CD4-positive, alpha-beta T cell (primary cell): ENCODE measurements at regions of chr14 and their contacts with region 1.

Region 1: GRCh38 chr14:99604283-99604765 is 317 bp upstream of the CCDC85C start:
- DNase-seq: peak; percentile 89 to 98 (median 96)
- ATAC-seq: peak; percentile 91
- H3K4me3 ChIP-seq: peak overlapping the region; percentile 88
- H3K4me3 Mint-ChIP-seq: peak overlapping the region; percentile 88
- H3K27ac ChIP-seq: peak overlapping the region; percentile 66 to 77
- H3K27ac Mint-ChIP-seq: peak overlapping the region; percentile 85
- H3K4me1 ChIP-seq: peaks cover 50% of the 10 kb centered on the region
- H3K4me1 Mint-ChIP-seq: peaks cover 47% of the 10 kb centered on the region
- H3K27me3 ChIP-seq: no peaks in the 10 kb centered on the region
- H3K27me3 Mint-ChIP-seq: no peaks in the 10 kb centered on the region
- CTCF ChIP-seq: no peak

Region 2: GRCh38 chr14:99064226-99064954 is 539.9 kb before region 1 on chr14:
- CTCF ChIA-PET with region 1: no interaction called
- POLR2A ChIA-PET with region 1: no interaction called
- intact Hi-C with region 1: no loop called
- DNase-seq: no peak
- ATAC-seq: no peak
- H3K4me3 ChIP-seq: no peak overlapping the region
- H3K4me3 Mint-ChIP-seq: no peak overlapping the region
- H3K27ac ChIP-seq: no peak overlapping the region
- H3K27ac Mint-ChIP-seq: no peak overlapping the region
- H3K4me1 ChIP-seq: no peaks in the 10 kb centered on the region
- H3K4me1 Mint-ChIP-seq: peaks cover 8% of the 10 kb centered on the region
- H3K27me3 ChIP-seq: no peaks in the 10 kb centered on the region
- H3K27me3 Mint-ChIP-seq: no peaks in the 10 kb centered on the region
- CTCF ChIP-seq: no peak

Region 3: GRCh38 chr14:99480917-99481744 is 123.2 kb before region 1 on chr14 and contains the start of gene CCNK:
- CTCF ChIA-PET with region 1: no interaction called
- POLR2A ChIA-PET with region 1: interaction called, 66 read pairs
- intact Hi-C with region 1: loop called (anchors 2 to 5 kb)
- DNase-seq: peak; percentile 100
- ATAC-seq: peak; percentile 87
- H3K4me3 ChIP-seq: peak within 1 kb of the TSS; percentile 96
- H3K4me3 Mint-ChIP-seq: peak within 1 kb of the TSS; percentile 92
- H3K27ac ChIP-seq: peak within 1 kb of the TSS; percentile 90 to 96
- H3K27ac Mint-ChIP-seq: peak within 1 kb of the TSS; percentile 94
- H3K4me1 ChIP-seq: peaks cover 29% of the 10 kb centered on the region
- H3K4me1 Mint-ChIP-seq: peaks cover 74% of the 10 kb centered on the region
- H3K27me3 ChIP-seq: no peaks in the 10 kb centered on the region
- H3K27me3 Mint-ChIP-seq: no peaks in the 10 kb centered on the region
- CTCF ChIP-seq: no peak
- total RNA-seq, gene CCNK: 140 to 151 TPM

Region 4: DNA sequence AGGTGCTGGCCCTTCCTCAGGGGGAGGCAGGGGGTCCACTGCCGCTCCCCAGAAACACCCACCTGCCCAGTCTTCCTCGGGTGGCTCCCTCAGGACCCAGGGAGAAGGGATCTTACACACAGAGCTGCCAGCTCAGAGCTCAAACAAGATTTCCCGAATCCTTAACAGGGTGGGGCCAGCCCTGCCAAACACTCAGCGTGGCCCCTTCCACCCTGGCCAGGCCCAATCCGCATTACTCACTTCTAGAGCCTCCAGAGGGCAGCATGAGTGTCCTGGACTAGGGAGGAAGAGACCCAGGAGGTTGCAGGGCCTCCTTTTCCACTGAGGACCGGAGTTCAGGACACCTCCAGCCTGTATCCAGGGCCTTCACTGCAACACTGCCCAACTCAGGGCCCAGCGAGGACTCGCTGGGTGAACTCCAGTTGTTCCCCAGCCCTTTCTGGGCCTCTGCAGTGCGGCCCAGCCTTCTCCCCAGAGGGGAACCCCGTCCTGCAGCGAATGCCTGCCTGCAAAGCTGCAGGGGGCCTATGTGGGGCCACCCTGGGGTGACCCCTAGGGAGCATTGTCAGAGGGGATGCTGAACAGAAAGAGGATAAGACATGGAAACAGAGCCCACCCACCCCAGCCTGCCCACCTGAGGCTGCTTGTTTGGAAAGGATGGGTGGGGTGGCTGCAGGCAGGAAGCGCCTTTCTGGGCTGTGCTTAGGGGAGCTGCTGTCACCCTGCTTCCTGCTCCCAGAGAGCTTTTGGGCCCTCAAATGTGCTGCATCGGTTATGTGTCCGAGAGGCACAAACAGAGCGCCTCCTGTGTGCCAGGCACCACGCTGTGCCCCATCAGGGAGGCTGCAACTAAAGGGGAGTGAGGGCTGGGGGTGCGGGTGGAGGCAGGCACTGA is 79.3 kb before region 1 on chr14:
- CTCF ChIA-PET with region 1: no interaction called
- POLR2A ChIA-PET with region 1: interaction called, 17 read pairs
- intact Hi-C with region 1: no loop called
- DNase-seq: peak in 7 of 14 experiments; percentile 16 to 49 (median 22)
- ATAC-seq: peak; percentile 72
- H3K4me3 ChIP-seq: no peak overlapping the region
- H3K4me3 Mint-ChIP-seq: peak overlapping the region; percentile 75
- H3K27ac ChIP-seq: peak overlapping the region; percentile 48 to 67
- H3K27ac Mint-ChIP-seq: peak overlapping the region; percentile 84
- H3K4me1 ChIP-seq: peaks cover 24% of the 10 kb centered on the region
- H3K4me1 Mint-ChIP-seq: peaks cover 16% of the 10 kb centered on the region
- H3K27me3 ChIP-seq: no peaks in the 10 kb centered on the region
- H3K27me3 Mint-ChIP-seq: no peaks in the 10 kb centered on the region
- CTCF ChIP-seq: no peak

Region 5: GRCh38 chr14:99793213-99794150 is 189.2 kb after region 1 on chr14 and contains the start of gene EML1:
- CTCF ChIA-PET with region 1: no interaction called
- POLR2A ChIA-PET with region 1: interaction called, 3 read pairs
- intact Hi-C with region 1: loop called in 1 of 2 experiments (anchors 2 kb)
- DNase-seq: peak; percentile 56 to 91 (median 71)
- ATAC-seq: peak; percentile 81
- H3K4me3 ChIP-seq: peak within 1 kb of the TSS; percentile 29
- H3K4me3 Mint-ChIP-seq: peak within 1 kb of the TSS; percentile 83
- H3K27ac ChIP-seq: no peak within 1 kb of the TSS
- H3K27ac Mint-ChIP-seq: no peak within 1 kb of the TSS
- H3K4me1 ChIP-seq: peaks cover 8% of the 10 kb centered on the region
- H3K4me1 Mint-ChIP-seq: peaks cover 29% of the 10 kb centered on the region
- H3K27me3 ChIP-seq: peaks cover 12 to 19% of the 10 kb centered on the region in 2 experiments
- H3K27me3 Mint-ChIP-seq: peaks cover 38% of the 10 kb centered on the region
- CTCF ChIP-seq: no peak
- total RNA-seq, gene EML1: 0.59 TPM in 1 of 2 experiments, not detected in the other

Region 6: DNA sequence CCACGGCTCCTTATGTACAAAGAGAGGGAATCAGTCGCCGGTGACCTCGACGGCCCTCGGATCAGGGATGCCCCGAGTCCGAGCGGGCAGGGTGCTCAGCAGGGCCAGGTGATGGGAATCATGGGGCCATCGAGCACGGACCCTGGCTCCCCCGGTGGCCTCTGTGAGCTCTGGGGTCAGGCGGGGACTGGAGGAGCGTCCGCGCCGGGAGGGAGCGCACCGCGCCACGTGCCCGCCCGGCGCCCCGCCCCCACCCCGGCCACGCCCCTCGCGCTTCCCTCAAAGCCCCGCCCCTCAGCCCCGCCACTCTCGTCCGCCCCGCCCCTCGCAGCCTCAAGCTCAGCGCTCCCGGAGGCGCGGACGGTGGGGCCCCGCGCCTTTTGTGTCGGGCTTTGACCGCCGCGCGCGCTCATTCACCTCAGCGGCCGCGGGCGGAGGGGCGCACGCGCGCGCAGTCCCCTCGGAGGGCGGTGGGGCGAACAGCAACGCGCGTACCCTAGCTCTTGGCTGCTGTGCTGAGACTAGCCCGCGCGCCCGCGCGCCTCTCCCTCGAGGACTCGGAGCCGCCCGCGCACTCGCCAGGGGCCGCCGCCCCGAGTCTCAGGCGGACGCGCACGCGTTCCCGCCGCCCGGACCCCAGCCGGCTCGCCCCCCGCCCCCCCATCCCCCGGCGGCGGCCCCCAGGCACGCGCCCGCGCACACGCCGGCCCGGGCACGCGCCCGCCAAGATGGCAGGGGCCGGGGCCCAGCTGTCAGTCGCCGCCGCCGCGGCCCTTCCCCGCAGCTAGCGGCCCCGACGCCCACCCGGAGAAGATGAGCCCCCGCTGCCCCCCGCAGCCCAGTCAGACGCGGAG is 367.0 kb after region 1 on chr14:
- CTCF ChIA-PET with region 1: no interaction called
- POLR2A ChIA-PET with region 1: no interaction called
- intact Hi-C with region 1: loop called in 1 of 2 experiments (anchors 5 kb)
- DNase-seq: peak; percentile 70 to 92 (median 76)
- ATAC-seq: peak; percentile 88
- H3K4me3 ChIP-seq: peak overlapping the region; percentile 24
- H3K4me3 Mint-ChIP-seq: peak overlapping the region; percentile 86
- H3K27ac ChIP-seq: no peak overlapping the region
- H3K27ac Mint-ChIP-seq: no peak overlapping the region
- H3K4me1 ChIP-seq: peaks cover 12% of the 10 kb centered on the region
- H3K4me1 Mint-ChIP-seq: peaks cover 26% of the 10 kb centered on the region
- H3K27me3 ChIP-seq: peaks cover 0 to 3% of the 10 kb centered on the region in 2 experiments
- H3K27me3 Mint-ChIP-seq: peaks cover 21% of the 10 kb centered on the region
- CTCF ChIP-seq: no peak